GM13976 (cell line): ENCODE measurements at regions of chr7 and their contacts with region 1.

Region 1: GRCh38 chr7:100469227-100470044 is 5.4 kb upstream of the SPACDR start:
- DNase-seq: peak; percentile 92
- CTCF ChIP-seq: peak; percentile 91

Region 2: GRCh38 chr7:100563809-100564400 is 94.5 kb after region 1 on chr7:
- in situ Hi-C with region 1: loop called (anchors 25 kb)
- DNase-seq: peak; percentile 87
- CTCF ChIP-seq: peak; percentile 71

Region 3: GRCh38 chr7:100874577-100875355 is 405.3 kb after region 1 on chr7 and contains the start of gene SRRT:
- in situ Hi-C with region 1: loop called (anchors 25 kb)
- DNase-seq: peak; percentile 99
- CTCF ChIP-seq: no peak